ENCODE measurements at regions of chr2 and their contacts with region 1.

Region 1: DNA sequence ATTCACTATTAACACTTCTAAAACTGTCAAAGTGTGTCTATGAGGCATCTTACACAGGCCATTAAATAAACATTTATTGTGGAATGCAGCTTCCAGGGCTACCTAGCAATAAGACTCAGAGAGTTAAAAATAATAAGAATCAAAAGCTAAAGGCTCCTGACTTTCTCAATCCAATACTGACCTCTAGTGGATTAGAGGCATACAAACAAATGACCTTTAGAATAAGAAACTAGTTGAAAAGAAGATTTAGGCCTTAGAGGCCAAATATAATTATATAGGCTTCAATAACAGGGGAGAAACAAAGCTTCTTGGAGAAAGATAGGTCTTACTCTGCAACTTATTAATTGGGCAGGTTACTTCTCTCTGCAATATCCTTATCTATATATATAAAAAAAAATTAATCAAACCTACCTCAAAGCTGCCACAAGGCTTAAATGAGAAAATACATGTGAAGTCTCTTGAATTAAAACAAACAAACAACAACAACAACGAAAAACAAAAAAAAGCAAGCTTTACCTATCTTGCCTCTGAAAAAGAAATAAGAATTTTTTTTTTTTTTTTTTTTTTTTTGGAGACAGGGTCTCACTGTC is 246.1 kb downstream of the EXOC6B start:
- DNase-seq: peak; percentile 35
- H3K4me3 ChIP-seq: no peak overlapping the region
- CTCF ChIP-seq: peak; percentile 41

Region 2: GRCh38 chr2:71933467-71934319 is 646.0 kb before region 1 on chr2:
- in situ Hi-C with region 1: loop called (anchors 10 kb)
- DNase-seq: no peak
- H3K4me3 ChIP-seq: no peak overlapping the region
- CTCF ChIP-seq: peak; percentile 27

Region 3: DNA sequence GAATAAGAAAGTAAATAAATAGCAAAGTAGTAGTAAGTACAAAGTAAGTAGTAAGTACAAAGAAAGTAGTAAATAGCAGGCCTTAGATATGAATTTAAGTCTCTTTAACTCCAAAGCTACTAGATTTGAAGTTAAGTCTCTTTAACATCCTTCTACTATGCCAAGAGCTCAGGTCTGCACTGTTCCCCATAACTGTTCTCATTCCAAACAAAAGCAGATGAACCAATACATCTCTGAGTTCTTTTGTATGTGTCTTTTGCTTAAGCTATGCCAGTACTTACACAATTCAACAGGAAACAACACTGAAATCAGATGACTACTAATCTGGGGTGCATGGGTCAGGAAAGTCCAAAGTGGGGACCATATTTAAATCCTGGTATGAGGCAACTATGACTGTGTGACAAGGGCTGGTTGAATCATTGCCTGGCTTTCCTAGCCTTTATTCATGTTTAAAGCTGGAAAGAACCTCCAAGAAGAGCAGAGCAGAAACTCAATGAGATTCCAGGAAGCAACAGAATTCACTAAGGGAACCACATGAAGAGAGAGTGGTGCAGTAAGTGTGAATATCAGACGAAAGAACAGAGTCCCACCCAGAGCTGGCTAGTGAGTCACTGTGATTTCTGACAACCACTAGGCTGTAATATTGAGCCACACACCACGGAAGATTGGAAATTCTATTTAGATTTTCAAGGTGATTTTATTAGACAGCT is 381.0 kb before region 1 on chr2:
- in situ Hi-C with region 1: loop called (anchors 25 kb)
- DNase-seq: no peak
- H3K4me3 ChIP-seq: no peak overlapping the region
- CTCF ChIP-seq: peak; percentile 42

Measured in astrocyte of the cerebellum (primary cell).